ENCODE measurements at regions of chr5 and their contacts with region 1.

Region 1: GRCh38 chr5:135310328-135310989 is 88.6 kb downstream of the MACROH2A1 start:
- DNase-seq: peak; percentile 91
- ATAC-seq: peak; percentile 37
- H3K4me3 ChIP-seq: no peak overlapping the region
- H3K27ac ChIP-seq: peak overlapping the region; percentile 63
- H3K4me1 ChIP-seq: peaks cover 29% of the 10 kb centered on the region
- H3K27me3 ChIP-seq: no peaks in the 10 kb centered on the region
- CTCF ChIP-seq: no peak
- POLR2A ChIP-seq: no peak
- RAD21 ChIP-seq: no peak

Region 2: GRCh38 chr5:134267366-134268018 is 1043.0 kb before region 1 on chr5:
- CTCF ChIA-PET with region 1: no interaction called
- POLR2A ChIA-PET with region 1: no interaction called
- dilution Hi-C with region 1: no loop called
- in situ Hi-C with region 1: no loop called
- intact Hi-C with region 1: no loop called
- DNase-seq: peak; percentile 60
- ATAC-seq: peak; percentile 77
- H3K4me3 ChIP-seq: no peak overlapping the region
- H3K27ac ChIP-seq: no peak overlapping the region
- H3K4me1 ChIP-seq: no peaks in the 10 kb centered on the region
- H3K27me3 ChIP-seq: no peaks in the 10 kb centered on the region
- CTCF ChIP-seq: no peak
- POLR2A ChIP-seq: no peak
- RAD21 ChIP-seq: no peak

Region 3: DNA sequence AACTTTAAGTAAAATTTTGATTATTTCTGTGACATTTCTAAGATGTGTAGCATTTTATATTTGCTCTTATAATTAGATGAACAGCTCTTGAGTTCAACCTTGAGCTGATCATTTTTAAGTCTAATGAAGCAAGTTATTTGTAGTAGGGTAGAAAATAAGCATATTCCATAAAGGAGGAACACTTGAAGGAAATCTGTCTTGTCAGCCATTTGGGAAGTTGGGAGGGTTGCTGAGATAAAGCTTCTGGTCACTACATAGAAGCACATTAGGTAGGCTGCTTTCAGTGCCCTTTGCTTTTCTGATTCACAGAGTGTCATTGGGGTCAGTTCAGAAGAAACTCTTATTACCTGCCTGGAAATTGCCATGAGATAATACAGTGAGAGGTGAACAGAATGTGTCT is 617.7 kb before region 1 on chr5:
- CTCF ChIA-PET with region 1: no interaction called
- POLR2A ChIA-PET with region 1: no interaction called
- dilution Hi-C with region 1: no loop called
- in situ Hi-C with region 1: no loop called
- intact Hi-C with region 1: no loop called
- DNase-seq: no peak
- ATAC-seq: no peak
- H3K4me3 ChIP-seq: no peak overlapping the region
- H3K27ac ChIP-seq: no peak overlapping the region
- H3K4me1 ChIP-seq: no peaks in the 10 kb centered on the region
- H3K27me3 ChIP-seq: no peaks in the 10 kb centered on the region
- CTCF ChIP-seq: no peak
- POLR2A ChIP-seq: no peak
- RAD21 ChIP-seq: no peak

Region 4: DNA sequence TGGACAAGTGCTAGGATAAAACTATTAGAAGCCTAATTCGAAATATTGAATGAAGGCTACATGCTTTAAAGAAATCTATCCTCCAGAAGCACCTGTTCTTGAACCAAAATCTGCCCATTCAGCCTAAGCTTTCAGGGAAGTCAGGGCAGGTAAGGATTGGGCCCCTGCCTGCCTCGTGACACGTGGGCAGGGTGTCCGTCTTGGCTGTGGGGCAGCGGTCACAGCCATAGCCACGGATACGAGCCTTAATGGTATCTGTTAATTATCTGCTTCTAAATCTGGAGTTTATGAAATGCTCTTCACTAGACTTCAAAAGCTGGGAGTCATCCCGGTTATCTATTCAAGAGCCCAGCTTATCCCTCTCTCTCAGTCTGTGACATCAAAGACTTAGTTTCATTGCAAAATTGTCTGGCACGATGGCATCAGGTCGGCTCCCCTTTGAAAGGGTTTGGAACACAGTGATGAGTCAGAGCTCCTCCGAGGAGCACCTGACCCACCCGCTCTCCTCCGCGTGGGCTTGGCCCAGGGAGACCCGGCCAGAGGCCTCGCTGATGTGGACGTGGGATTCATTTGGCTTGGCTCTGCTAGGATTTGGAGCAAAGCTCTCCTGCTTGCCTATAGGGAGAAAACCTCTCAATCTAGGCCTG is 47.3 kb before region 1 on chr5:
- CTCF ChIA-PET with region 1: no interaction called
- POLR2A ChIA-PET with region 1: no interaction called
- dilution Hi-C with region 1: no loop called
- in situ Hi-C with region 1: no loop called
- intact Hi-C with region 1: loop called (anchors 2 kb)
- DNase-seq: no peak
- ATAC-seq: no peak
- H3K4me3 ChIP-seq: no peak overlapping the region
- H3K27ac ChIP-seq: peak overlapping the region; percentile 3; the same call in 1 of the 2 replicates
- H3K4me1 ChIP-seq: peaks cover 26% of the 10 kb centered on the region
- H3K27me3 ChIP-seq: no peaks in the 10 kb centered on the region
- CTCF ChIP-seq: no peak
- POLR2A ChIP-seq: no peak
- RAD21 ChIP-seq: no peak

Measured in IMR-90 (cell line).